Panc1 (cell line): ENCODE measurements at regions of chr11 and their contacts with region 1.

Region 1: GRCh38 chr11:128290106-128290840 is 297.1 kb downstream of the ETS1 start:
- DNase-seq: peak; percentile 68
- ATAC-seq: peak; percentile 96
- H3K4me3 ChIP-seq: no peak overlapping the region
- H3K27ac ChIP-seq: no peak overlapping the region
- H3K4me1 ChIP-seq: no peaks in the 10 kb centered on the region
- H3K27me3 ChIP-seq: no peaks in the 10 kb centered on the region
- CTCF ChIP-seq: peak; percentile 89

Region 2: DNA sequence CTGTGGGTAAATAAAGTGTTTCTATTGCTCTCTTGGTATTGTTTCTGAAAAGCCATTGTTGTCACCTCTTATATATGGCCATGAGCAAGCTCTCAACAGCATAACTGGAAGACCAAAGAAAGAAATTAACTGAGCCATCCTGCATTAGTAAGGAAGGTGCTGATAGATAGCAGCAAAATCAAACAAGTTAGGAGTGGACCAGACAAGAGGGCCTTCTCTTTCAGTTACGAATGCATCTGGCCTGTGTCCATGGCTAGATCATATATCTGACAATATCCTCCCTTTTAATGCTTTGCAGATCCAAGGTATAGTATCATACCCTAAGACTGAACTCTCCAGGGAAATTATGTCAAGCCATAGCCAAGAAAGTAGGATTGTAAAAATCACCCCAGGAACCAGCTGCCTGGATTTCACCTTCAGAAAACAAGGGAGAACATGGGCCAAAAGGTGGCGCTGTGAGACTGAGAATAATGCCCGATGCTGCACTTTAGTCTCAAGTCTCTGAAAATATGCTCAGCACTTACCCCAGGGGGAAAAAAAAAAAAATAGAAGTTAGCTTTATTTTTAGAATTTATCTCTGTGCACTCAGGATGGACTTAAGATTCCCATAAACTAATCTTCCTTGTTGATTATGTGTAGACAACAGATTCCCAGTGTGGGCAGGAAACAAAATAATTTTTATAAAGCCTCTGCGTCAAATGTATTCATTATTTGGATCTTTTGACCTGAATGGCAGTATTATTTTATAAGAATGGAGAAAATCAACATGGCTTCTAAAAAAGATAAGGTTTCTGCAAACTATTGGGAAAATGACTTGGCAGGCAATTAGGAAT is 118.0 kb before region 1 on chr11:
- CTCF ChIA-PET with region 1: no interaction called
- POLR2A ChIA-PET with region 1: interaction called, 9 read pairs
- in situ Hi-C with region 1: no loop called
- intact Hi-C with region 1: loop called (anchors 2 kb)
- DNase-seq: peak; percentile 89
- ATAC-seq: peak; percentile 96
- H3K4me3 ChIP-seq: no peak overlapping the region
- H3K27ac ChIP-seq: peak overlapping the region; percentile 49
- H3K4me1 ChIP-seq: 0 out of 2 replicates have a peak, but pooled peaks cover 6% of the 10 kb centered on the region
- H3K27me3 ChIP-seq: no peaks in the 10 kb centered on the region
- CTCF ChIP-seq: peak; percentile 86

Region 3: GRCh38 chr11:128365044-128365443 is 74.8 kb after region 1 on chr11:
- CTCF ChIA-PET with region 1: no interaction called
- POLR2A ChIA-PET with region 1: no interaction called
- in situ Hi-C with region 1: no loop called
- intact Hi-C with region 1: no loop called
- DNase-seq: no peak
- ATAC-seq: no peak
- H3K4me3 ChIP-seq: no peak overlapping the region
- H3K27ac ChIP-seq: no peak overlapping the region
- H3K4me1 ChIP-seq: no peaks in the 10 kb centered on the region
- H3K27me3 ChIP-seq: no peaks in the 10 kb centered on the region
- CTCF ChIP-seq: no peak

Region 4: GRCh38 chr11:128448200-128448886 is 158.1 kb after region 1 on chr11:
- CTCF ChIA-PET with region 1: interaction called, 3 read pairs
- POLR2A ChIA-PET with region 1: no interaction called
- in situ Hi-C with region 1: no loop called
- intact Hi-C with region 1: loop called (anchors 10 kb)
- DNase-seq: peak; percentile 96
- ATAC-seq: peak; percentile 95
- H3K4me3 ChIP-seq: no peak overlapping the region
- H3K27ac ChIP-seq: peak overlapping the region; percentile 2
- H3K4me1 ChIP-seq: peaks cover 10% of the 10 kb centered on the region
- H3K27me3 ChIP-seq: no peaks in the 10 kb centered on the region
- CTCF ChIP-seq: peak; percentile 21; the same call in 1 of the 2 replicates

Region 5: GRCh38 chr11:128472128-128473089 is 182.1 kb after region 1 on chr11:
- CTCF ChIA-PET with region 1: no interaction called
- POLR2A ChIA-PET with region 1: no interaction called
- in situ Hi-C with region 1: no loop called
- intact Hi-C with region 1: loop called (anchors 10 kb)
- DNase-seq: no peak
- ATAC-seq: peak; percentile 36; the same call in 1 of the 2 replicates
- H3K4me3 ChIP-seq: no peak overlapping the region
- H3K27ac ChIP-seq: no peak overlapping the region
- H3K4me1 ChIP-seq: peaks cover 30% of the 10 kb centered on the region
- H3K27me3 ChIP-seq: no peaks in the 10 kb centered on the region
- CTCF ChIP-seq: no peak

Region 6: DNA sequence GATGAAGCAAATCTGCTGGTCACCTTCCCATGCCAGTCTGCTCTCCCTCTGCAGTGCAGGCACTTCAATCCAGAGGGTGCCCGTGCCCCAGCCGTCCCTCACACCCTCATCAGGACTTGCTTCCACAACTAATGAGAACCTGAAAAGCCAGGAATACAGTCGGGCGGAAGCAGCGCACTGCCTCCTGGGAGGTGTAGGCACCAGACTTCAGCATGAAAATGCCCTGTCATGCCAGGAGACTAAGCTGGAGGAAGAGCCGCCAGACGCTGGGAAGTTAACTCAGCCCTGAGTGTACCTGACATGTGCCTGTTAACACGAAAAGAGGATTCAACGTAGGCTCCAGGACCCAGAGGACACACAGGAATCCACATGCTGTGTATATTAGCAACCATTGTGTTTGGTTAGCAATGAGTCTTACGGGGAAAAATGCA is 363.5 kb after region 1 on chr11:
- CTCF ChIA-PET with region 1: no interaction called
- POLR2A ChIA-PET with region 1: no interaction called
- in situ Hi-C with region 1: no loop called
- intact Hi-C with region 1: no loop called
- DNase-seq: peak; percentile 18
- ATAC-seq: peak; percentile 89
- H3K4me3 ChIP-seq: no peak overlapping the region
- H3K27ac ChIP-seq: no peak overlapping the region
- H3K4me1 ChIP-seq: no peaks in the 10 kb centered on the region
- H3K27me3 ChIP-seq: peaks cover 8% of the 10 kb centered on the region; the same call in 1 of the 2 replicates
- CTCF ChIP-seq: no peak